Aorta (tissue), 5 donors: ENCODE measurements at regions of chr4 and their contacts with region 1.

Region 1: DNA sequence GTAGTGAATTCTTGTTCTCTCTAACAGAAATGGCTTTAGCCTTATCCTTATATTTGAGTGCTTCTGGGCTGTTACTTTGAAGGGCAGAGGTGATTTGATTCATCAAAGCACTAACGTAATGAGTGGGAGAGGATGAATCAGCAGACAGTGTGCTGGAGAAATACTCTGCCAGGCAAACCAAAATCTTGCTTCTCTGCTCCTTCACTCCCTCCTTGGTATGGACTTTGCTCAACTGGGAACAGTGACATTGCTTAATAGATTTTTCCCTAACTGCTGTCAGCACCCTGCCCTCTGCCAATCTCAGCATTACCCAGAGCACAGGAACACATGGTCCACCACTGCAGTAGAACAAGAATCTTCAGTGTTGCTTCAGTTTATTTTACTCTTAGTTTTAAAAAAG is 56.0 kb downstream of the PDLIM5 start:
- DNase-seq: peak in 1 of 2 donors; percentile 59
- ATAC-seq: peak; percentile 83
- H3K4me3 ChIP-seq: no peak overlapping the region
- H3K27ac ChIP-seq: no peak overlapping the region
- H3K4me1 ChIP-seq: peaks cover 3 to 5% of the 10 kb centered on the region in 2 donors
- H3K27me3 ChIP-seq: no peaks in the 10 kb centered on the region

Region 2: DNA sequence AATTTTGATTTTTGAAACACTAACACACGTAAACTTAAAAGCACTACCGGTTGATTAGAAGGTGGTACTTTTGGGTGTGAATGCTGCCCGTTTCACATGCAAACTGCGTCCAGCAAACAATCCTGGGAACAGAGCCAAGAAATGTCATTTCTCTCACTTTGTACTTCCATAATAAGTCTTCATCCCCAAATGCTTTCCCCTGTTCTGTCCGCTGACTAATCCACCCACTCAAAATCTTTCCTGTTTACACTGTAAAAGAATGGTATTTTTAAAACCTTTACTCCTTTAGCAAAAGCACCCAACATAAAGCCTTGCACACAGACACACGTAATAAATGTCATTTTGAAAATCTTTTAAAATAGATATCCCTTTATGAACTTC is 95.1 kb before region 1 on chr4:
- intact Hi-C with region 1: loop called in 1 of 2 experiments (anchors 5 kb)
- DNase-seq: no peak
- ATAC-seq: no peak
- H3K4me3 ChIP-seq: peak overlapping the region in 1 of 2 donors; percentile 59
- H3K27ac ChIP-seq: peak overlapping the region; percentile 57 to 71
- H3K4me1 ChIP-seq: peaks cover 6 to 7% of the 10 kb centered on the region in 2 donors
- H3K27me3 ChIP-seq: no peaks in the 10 kb centered on the region

Region 3: DNA sequence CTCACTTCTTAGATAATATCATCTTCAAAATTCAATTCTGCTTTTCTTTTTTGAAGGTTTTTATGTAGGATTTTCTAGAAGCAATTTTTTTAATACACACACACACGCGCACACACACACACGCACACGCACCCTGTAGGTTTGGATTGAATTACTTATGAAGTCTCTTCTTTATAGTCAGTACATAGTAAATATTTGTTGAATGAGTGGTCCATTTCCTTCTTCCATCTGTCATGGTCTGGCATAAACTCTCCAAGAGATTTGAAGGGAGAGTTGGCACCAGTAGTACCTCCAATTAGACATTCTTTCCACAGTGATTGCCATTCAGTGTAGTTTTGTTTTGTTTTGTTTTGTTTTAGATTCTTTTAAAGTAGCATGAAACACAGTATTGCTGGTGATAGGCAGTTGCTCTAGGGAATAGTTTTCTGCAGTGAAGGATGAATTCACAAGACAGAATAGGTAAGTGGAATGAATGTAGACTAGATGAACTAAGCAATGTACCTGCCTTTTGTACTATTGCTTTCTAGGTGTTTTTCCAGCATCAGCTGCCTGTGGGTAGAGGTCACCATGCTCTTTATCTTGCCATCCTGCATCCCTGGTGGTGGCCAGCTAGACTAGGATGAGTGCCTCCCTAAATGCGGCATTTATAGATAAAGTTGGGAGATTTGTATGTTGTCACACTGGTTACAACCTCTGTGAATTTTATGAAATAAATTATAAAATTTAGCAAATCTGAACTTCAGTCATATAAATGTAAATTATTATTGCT is 35.5 kb before region 1 on chr4:
- intact Hi-C with region 1: loop called in 1 of 2 experiments (anchors 5 kb)
- DNase-seq: no peak
- ATAC-seq: no peak
- H3K4me3 ChIP-seq: no peak overlapping the region
- H3K27ac ChIP-seq: no peak overlapping the region
- H3K4me1 ChIP-seq: peaks cover 0 to 10% of the 10 kb centered on the region in 2 donors
- H3K27me3 ChIP-seq: no peaks in the 10 kb centered on the region

Region 4: GRCh38 chr4:94561249-94562024 is 53.7 kb after region 1 on chr4:
- intact Hi-C with region 1: no loop called
- DNase-seq: no peak
- ATAC-seq: peak; percentile 72
- H3K4me3 ChIP-seq: no peak overlapping the region
- H3K27ac ChIP-seq: no peak overlapping the region
- H3K4me1 ChIP-seq: peaks cover 1 to 8% of the 10 kb centered on the region in 2 donors
- H3K27me3 ChIP-seq: no peaks in the 10 kb centered on the region